Naive thymus-derived CD4-positive, alpha-beta T cell (primary cell): ENCODE measurements at regions of chr16 and their contacts with region 1.

Region 1: DNA sequence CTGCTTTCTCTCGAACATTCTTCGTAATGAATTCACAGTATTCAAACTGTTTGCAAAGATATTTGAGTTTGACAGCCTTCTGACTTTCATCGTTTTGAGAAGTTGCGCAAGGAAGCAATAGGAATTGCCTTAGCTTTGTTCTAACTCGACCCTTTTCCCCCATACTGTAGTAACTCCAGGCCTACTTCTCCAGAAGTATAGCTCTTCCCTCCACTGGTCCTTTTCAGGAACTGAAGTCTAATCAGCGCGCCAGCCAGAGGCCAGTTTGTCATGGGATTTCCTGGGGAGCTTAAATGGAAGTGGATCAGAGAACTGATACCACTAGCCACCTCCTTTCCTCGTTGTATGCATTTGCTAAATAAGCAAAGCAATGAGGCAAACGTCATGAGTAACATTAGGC is 27.9 kb downstream of the CDR2 start:
- DNase-seq: no peak
- ATAC-seq: no peak
- H3K4me3 ChIP-seq: no peak overlapping the region
- H3K4me3 Mint-ChIP-seq: no peak overlapping the region
- H3K27ac ChIP-seq: no peak overlapping the region
- H3K27ac Mint-ChIP-seq: peak overlapping the region in 8 of 9 donors; percentile 1 to 86 (median 66)
- H3K4me1 ChIP-seq: no peaks in the 10 kb centered on the region
- H3K4me1 Mint-ChIP-seq: peaks cover 3 to 29% (median 24%) of the 10 kb centered on the region in 7 donors
- H3K27me3 ChIP-seq: no peaks in the 10 kb centered on the region
- H3K27me3 Mint-ChIP-seq: no peaks in the 10 kb centered on the region

Region 2: GRCh38 chr16:22198547-22199293 is 147.8 kb before region 1 on chr16:
- CTCF ChIA-PET with region 1: no interaction called
- POLR2A ChIA-PET with region 1: no interaction called
- intact Hi-C with region 1: no loop called
- DNase-seq: no peak
- ATAC-seq: no peak
- H3K4me3 ChIP-seq: no peak overlapping the region
- H3K4me3 Mint-ChIP-seq: peak overlapping the region in 4 of 10 donors; percentile 27 to 56 (median 48)
- H3K27ac ChIP-seq: no peak overlapping the region
- H3K27ac Mint-ChIP-seq: peak overlapping the region in 3 of 9 donors; percentile 41 to 82 (median 52)
- H3K4me1 ChIP-seq: peaks cover 13 to 15% of the 10 kb centered on the region in 2 donors
- H3K4me1 Mint-ChIP-seq: peaks cover 20 to 48% (median 39%) of the 10 kb centered on the region in 7 donors
- H3K27me3 ChIP-seq: no peaks in the 10 kb centered on the region
- H3K27me3 Mint-ChIP-seq: peaks cover 0 to 5% (median 0%) of the 10 kb centered on the region in 5 donors

Region 3: GRCh38 chr16:22402191-22402590 is 55.7 kb after region 1 on chr16:
- CTCF ChIA-PET with region 1: no interaction called
- POLR2A ChIA-PET with region 1: no interaction called
- intact Hi-C with region 1: loop called in 1 of 2 experiments (anchors 5 kb)
- DNase-seq: no peak
- ATAC-seq: no peak
- H3K4me3 ChIP-seq: no peak overlapping the region
- H3K4me3 Mint-ChIP-seq: no peak overlapping the region
- H3K27ac ChIP-seq: no peak overlapping the region
- H3K27ac Mint-ChIP-seq: no peak overlapping the region
- H3K4me1 ChIP-seq: no peaks in the 10 kb centered on the region
- H3K4me1 Mint-ChIP-seq: peaks cover 0 to 12% (median 7%) of the 10 kb centered on the region in 7 donors
- H3K27me3 ChIP-seq: no peaks in the 10 kb centered on the region
- H3K27me3 Mint-ChIP-seq: no peaks in the 10 kb centered on the region